ENCODE measurements at regions of chr5 and their contacts with region 1.

Region 1: GRCh38 chr5:141094481-141095262 is at the start of gene PCDHB2:
- DNase-seq: no peak
- ATAC-seq: peak; percentile 98
- H3K4me3 ChIP-seq: peak within 1 kb of the TSS; percentile 79 to 86
- H3K27ac ChIP-seq: peak within 1 kb of the TSS; percentile 92
- H3K4me1 ChIP-seq: peaks cover 10% of the 10 kb centered on the region
- H3K27me3 ChIP-seq: no peaks in the 10 kb centered on the region; the same call in none of the 2 replicates
- CTCF ChIP-seq: peak; percentile 90
- total RNA-seq, gene PCDHB2: 12.8 TPM

Region 2: DNA sequence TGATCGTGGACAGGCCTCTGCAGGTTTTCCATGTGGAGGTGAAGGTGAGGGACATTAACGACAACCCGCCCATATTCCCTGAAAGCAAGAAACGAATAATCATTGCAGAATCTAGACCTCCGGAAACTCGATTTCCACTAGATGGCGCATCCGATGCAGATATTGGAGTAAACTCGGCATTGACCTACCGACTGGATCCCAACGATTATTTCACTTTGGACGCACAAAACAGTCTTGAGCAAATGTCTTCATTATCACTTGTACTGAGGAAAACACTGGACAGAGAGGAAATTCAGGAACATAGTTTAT is 212.1 kb before region 1 on chr5:
- CTCF ChIA-PET with region 1: no interaction called
- POLR2A ChIA-PET with region 1: no interaction called
- in situ Hi-C with region 1: no loop called
- intact Hi-C with region 1: no loop called
- DNase-seq: no peak
- ATAC-seq: peak; percentile 82
- H3K4me3 ChIP-seq: peak overlapping the region; percentile 24 to 54
- H3K27ac ChIP-seq: no peak overlapping the region
- H3K4me1 ChIP-seq: no peaks in the 10 kb centered on the region
- H3K27me3 ChIP-seq: no peaks in the 10 kb centered on the region
- CTCF ChIP-seq: peak; percentile 70

Region 3: DNA sequence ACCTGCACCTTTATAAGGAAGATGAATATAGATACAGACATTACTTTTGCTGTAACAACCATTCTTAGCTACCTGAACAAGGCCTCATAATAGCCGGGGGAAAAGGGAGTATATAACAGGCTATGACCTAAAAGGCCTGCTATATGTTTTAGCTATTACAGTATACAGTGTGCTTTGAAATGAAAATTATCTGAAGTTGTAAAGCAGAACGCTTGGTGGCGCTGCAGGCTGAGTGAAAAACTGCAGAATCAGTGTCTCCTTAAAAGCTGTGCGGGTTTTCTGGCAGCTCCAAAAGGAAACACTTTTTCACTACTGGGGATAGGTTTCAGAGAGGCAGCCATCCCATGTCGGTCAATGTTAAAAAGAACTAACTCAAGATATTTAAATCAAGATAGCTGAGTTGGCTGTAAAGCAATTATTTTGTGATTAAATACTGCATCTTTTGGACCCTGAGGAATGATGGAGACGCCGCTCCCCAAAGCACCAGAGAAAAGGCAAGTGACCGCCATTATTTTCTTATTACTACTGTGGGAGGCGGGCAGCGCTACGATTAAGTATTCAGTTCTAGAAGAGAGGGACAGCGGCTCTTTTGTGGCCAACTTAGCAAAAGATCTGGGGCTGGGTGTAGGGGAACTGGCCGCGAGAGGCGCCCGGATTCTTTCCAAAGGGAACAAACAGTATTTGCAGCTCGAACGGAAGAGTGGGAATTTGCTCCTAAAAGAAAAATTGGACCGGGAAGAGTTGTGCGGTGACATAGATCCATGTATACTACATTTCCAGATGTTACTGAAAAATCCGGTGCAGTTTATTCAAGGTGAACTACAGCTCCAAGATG is 61.1 kb after region 1 on chr5:
- CTCF ChIA-PET with region 1: interaction called, 10 read pairs
- POLR2A ChIA-PET with region 1: no interaction called
- in situ Hi-C with region 1: no loop called
- intact Hi-C with region 1: no loop called
- DNase-seq: no peak
- ATAC-seq: peak; percentile 92
- H3K4me3 ChIP-seq: peak overlapping the region; percentile 47 to 49
- H3K27ac ChIP-seq: peak overlapping the region; percentile 59
- H3K4me1 ChIP-seq: peaks cover 10% of the 10 kb centered on the region; the same call in 1 of the 2 replicates
- H3K27me3 ChIP-seq: no peaks in the 10 kb centered on the region
- CTCF ChIP-seq: peak; percentile 84

Region 4: DNA sequence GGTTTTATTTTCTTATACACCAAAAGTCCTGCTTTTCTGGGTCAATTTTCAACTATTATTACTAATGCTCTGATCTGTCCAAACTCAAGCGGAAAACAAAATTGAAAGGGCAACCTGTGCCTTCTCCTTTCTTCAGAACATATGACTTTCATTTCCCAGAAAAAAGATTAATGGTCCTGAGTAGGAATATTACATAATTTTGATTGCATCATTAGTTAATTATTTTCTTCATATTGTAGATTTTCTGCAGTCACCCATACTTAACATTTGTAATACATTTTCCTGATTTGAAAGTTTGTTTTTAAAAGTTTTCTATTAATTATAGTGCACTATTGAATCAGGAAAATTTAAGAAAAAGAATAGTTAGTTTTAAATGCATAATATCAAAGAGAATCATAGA is 81.3 kb after region 1 on chr5:
- CTCF ChIA-PET with region 1: interaction called, 6 read pairs
- POLR2A ChIA-PET with region 1: no interaction called
- in situ Hi-C with region 1: loop called (anchors 25 kb)
- intact Hi-C with region 1: loop called (anchors 5 kb)
- DNase-seq: no peak
- ATAC-seq: no peak
- H3K4me3 ChIP-seq: no peak overlapping the region
- H3K27ac ChIP-seq: no peak overlapping the region
- H3K4me1 ChIP-seq: peaks cover 7% of the 10 kb centered on the region
- H3K27me3 ChIP-seq: peaks cover 24% of the 10 kb centered on the region
- CTCF ChIP-seq: no peak